ENCODE measurements at regions of chr18 and their contacts with region 1.

Region 1: DNA sequence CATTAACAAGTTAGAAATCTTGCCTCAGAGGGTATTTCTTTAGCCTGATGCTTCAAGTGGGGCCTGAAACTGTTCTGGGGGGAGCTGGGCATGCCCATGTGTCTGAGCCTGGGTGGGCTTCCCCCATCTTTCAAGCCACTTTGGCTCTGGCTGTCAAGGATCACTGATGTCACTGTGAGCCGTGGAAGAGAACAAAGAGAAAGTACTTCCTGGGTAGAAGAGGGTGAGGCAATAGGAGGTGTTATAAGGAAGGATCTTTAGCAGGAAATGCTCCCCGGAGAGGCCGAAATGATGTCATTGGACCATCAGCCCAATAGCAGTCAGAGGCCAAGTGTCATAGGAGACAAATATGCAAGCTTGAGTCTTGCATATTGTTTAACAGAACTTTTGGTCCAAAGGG is 228.4 kb upstream of the MEX3C start:
- DNase-seq: no peak
- H3K4me3 ChIP-seq: no peak overlapping the region
- H3K27ac ChIP-seq: no peak overlapping the region
- H3K4me1 ChIP-seq: peaks cover 18% of the 10 kb centered on the region
- H3K27me3 ChIP-seq: no peaks in the 10 kb centered on the region
- CTCF ChIP-seq: no peak

Region 2: GRCh38 chr18:50866765-50867164 is 559.1 kb before region 1 on chr18:
- CTCF ChIA-PET with region 1: interaction called, 18 read pairs
- dilution Hi-C with region 1: no loop called
- in situ Hi-C with region 1: no loop called
- intact Hi-C with region 1: no loop called
- DNase-seq: no peak
- H3K4me3 ChIP-seq: no peak overlapping the region
- H3K27ac ChIP-seq: no peak overlapping the region
- H3K4me1 ChIP-seq: peaks cover 32% of the 10 kb centered on the region
- H3K27me3 ChIP-seq: no peaks in the 10 kb centered on the region
- CTCF ChIP-seq: peak; percentile 13 to 29

Region 3: DNA sequence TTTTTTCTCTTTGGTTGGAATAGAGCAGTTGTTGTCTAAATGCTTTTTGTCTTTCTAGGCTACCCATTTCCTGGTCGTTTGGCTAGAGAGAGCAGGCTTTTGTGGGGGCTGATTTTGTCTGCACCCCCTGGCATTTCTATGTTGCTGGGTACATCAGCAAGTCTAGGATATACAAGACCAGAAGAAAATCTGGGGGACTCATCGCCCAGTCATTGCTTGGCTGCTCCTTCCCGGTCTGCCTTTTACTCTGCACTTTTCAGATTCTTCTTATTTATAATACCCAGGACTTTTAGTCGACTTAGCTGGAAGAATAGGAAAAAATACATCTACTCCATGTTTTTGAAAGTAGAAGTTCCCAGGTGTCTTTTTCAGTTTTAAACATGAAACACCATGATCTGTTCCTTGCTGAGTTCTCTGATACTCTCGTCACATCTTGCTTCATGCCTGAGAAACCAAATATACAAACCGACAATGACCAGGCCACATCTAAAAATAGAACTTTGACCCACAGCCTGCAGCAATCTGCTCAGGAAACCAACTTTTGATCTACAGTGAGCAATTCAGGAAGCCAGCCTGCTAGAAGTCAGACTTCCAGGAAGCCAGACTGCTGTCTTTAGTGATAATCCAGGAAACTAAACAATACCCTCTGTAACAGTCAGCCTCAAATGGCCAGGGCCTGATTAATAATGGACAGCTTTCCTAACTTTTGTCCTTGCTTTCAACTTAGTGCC is 64.6 kb before region 1 on chr18:
- CTCF ChIA-PET with region 1: no interaction called
- dilution Hi-C with region 1: loop called (anchors 5 kb)
- in situ Hi-C with region 1: no loop called
- intact Hi-C with region 1: no loop called
- DNase-seq: no peak
- H3K4me3 ChIP-seq: no peak overlapping the region
- H3K27ac ChIP-seq: no peak overlapping the region
- H3K4me1 ChIP-seq: no peaks in the 10 kb centered on the region
- H3K27me3 ChIP-seq: no peaks in the 10 kb centered on the region
- CTCF ChIP-seq: no peak

Measured in mammary epithelial cell (primary cell).